ENCODE measurements at regions of chr21 and their contacts with region 1.

Region 1: GRCh38 chr21:45820171-45821091 is 161.1 kb upstream of the COL6A1 start:
- DNase-seq: peak; percentile 87 to 92
- H3K4me3 ChIP-seq: no peak overlapping the region
- H3K4me1 ChIP-seq: 0 out of 2 replicates have a peak, but pooled peaks cover 2% of the 10 kb centered on the region
- H3K27me3 ChIP-seq: no peaks in the 10 kb centered on the region

Region 2: DNA sequence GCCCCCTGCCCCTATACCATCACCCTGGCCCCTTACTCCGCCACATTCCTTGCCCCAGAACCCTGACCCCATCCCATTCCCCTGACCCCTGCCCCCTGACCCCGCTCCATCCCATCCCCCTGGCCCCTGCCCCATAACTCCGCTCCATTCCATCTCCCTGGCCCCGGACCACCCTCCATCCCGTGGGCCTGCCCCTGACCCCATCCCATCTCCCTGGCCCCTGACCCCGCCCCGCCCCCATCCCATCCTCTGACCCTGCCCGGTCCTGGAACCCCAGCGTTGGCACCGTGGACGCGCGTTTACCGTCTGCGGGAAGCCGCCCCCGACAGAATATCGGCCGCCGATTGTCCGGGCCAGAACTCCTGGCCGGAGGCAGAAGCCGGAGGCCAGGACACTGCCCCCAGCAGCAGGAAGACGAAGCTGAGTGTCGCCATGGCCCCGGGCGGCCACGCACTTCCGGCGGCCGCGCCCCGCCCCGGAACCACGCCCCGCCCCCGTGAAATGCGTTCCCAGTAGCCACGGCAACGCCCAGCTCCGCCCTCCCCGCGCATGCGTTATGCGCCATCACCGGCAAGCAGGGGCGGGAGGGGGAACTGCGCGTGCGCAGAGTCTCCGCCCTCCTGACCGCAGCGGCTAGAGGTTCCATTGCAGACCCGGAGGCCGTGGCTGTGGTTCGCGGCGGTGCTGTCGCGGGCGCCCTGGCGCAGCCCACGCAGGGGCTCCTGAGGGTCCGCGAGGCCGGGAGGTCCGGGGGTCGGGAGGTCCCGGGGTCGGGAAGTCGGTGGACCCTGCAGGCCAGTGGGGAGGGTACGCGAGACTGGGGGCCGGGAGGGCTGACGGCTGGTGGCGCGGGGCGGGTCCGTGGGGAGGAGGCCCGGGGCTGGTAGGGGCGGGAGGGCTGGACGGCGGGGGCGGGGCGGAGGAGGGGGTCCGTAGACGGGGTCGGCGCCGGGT is 532.7 kb before region 1 on chr21 and contains the start of gene POFUT2:
- in situ Hi-C with region 1: loop called (anchors 25 kb)
- DNase-seq: peak; percentile 85 to 98
- H3K4me3 ChIP-seq: peak within 1 kb of the TSS; percentile 83
- H3K4me1 ChIP-seq: peaks cover 10% of the 10 kb centered on the region
- H3K27me3 ChIP-seq: no peaks in the 10 kb centered on the region

Region 3: DNA sequence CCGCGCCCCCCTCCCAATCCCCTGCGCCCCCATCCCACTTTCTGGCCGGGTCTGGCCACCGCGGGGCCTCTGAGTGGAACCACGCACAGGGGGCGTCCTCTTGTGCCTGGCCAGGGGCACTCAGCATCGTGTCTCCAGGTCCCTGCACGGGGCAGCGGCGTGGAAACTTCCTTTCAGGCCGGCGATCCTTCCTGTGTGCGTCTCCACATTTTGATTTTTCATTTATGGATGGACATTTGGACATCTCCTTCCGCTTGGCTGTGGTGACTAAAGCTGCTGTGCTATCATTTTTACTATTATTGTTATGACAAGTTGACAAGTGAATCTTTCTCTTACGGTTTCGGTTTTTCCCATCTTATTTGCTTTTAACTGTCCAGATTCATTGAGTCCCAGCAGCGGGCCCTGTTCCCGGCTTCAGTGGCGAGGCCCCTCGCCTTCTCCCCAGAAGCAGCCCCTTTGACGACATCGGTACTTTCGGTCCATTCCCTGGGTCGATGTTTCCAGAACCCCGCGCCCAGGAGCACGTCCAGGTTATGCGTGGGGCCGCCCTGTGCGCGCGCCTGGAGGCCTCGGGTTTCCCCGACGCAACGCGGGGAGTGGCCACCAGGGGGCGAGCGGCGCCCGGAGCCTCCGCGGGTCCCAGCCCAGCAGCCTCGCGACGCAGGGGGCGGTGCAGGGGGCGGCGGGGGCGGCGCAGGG is 265.8 kb before region 1 on chr21:
- in situ Hi-C with region 1: loop called (anchors 5 kb)
- DNase-seq: peak; percentile 42 to 91
- H3K4me3 ChIP-seq: peak overlapping the region; percentile 29
- H3K4me1 ChIP-seq: no peaks in the 10 kb centered on the region; the same call in 1 of the 2 replicates
- H3K27me3 ChIP-seq: no peaks in the 10 kb centered on the region